Heart left ventricle (tissue), 16 donors: ENCODE measurements at regions of chr18 and their contacts with region 1.

Region 1: GRCh38 chr18:9147440-9148202 is 11.0 kb downstream of the ANKRD12 start:
- DNase-seq: peak in 2 of 5 donors; percentile 27 to 33
- ATAC-seq: peak; percentile 78 to 88 (median 84)
- H3K4me3 ChIP-seq: no peak overlapping the region
- H3K27ac ChIP-seq: peak overlapping the region in 2 of 12 donors; percentile 10 to 77
- H3K4me1 ChIP-seq: peaks cover 0 to 98% (median 69%) of the 10 kb centered on the region in 12 donors
- H3K27me3 ChIP-seq: no peaks in the 10 kb centered on the region
- CTCF ChIP-seq: peak; percentile 61 to 91 (median 74)
- POLR2A ChIP-seq: no peak

Region 2: DNA sequence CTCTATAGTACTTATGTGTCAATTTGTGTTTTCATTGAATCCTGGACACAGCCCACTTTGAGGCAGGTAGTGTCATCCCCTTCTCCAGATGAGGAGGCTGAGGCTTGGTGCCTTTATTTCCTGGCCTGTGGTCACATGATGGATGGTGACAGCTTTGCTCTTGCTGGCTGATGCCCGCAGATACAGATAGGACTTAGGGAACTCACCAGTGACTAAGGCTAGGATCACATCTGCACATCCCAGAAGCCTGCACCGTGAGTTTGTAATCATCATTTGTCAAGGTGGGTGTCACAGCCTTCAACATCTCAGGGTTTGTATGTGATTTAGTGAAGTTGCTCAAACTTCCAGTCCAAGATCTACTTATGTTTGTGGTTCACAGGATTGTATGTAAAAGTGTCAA is 833.5 kb before region 1 on chr18:
- intact Hi-C with region 1: no loop called
- DNase-seq: no peak
- ATAC-seq: no peak
- H3K4me3 ChIP-seq: no peak overlapping the region
- H3K27ac ChIP-seq: no peak overlapping the region
- H3K4me1 ChIP-seq: no peaks in the 10 kb centered on the region
- H3K27me3 ChIP-seq: no peaks in the 10 kb centered on the region
- CTCF ChIP-seq: no peak
- POLR2A ChIP-seq: no peak

Region 3: DNA sequence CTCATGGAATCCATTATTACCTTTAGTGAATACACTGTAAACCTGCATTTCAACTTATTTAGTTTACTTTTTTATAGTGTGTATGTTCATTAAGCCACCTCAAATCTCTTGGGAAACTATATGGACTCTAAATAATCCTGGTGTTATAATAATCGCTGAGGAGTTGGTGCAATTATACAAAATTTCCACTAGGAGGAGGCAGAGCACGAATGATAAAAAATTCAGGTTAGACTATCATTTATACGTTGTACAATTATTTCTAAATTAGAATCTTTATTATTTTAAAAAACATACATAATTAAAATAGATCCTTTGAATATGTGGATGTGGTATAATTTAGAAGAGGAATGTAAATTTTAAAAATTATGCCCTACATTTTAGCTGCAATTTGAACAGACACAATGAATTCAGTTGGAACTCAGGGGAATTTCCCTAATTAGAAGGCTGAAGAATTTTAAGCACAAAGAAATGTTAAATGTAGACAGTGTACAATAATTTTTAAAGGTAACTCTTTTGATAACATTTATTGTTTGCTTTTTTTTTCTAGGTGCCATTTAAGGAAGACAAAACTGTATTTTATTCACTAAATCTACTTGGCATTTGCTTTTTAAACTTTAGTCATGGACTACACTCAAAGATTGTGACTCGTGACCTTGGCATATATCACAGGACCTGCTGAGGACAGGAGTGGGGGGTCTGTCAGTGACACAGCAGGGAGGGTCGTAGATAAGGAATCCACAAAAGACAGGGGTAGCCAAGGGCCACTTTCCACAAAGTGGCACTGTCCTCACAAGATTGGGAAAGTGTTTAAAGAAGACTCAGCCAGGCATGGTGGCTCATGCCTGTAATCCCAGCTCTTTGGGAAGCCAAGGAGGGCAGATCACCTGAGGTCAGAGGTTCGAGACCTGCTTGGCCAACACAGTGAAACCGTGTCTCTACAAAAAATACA is 492.8 kb before region 1 on chr18:
- intact Hi-C with region 1: loop called in 1 of 10 experiments (anchors 5 kb)
- DNase-seq: no peak
- ATAC-seq: no peak
- H3K4me3 ChIP-seq: no peak overlapping the region
- H3K27ac ChIP-seq: no peak overlapping the region
- H3K4me1 ChIP-seq: peaks cover 0 to 6% (median 0%) of the 10 kb centered on the region in 12 donors
- H3K27me3 ChIP-seq: peaks cover 0 to 8% (median 0%) of the 10 kb centered on the region in 9 donors
- CTCF ChIP-seq: peak; percentile 69 to 89 (median 78)
- POLR2A ChIP-seq: no peak

Region 4: DNA sequence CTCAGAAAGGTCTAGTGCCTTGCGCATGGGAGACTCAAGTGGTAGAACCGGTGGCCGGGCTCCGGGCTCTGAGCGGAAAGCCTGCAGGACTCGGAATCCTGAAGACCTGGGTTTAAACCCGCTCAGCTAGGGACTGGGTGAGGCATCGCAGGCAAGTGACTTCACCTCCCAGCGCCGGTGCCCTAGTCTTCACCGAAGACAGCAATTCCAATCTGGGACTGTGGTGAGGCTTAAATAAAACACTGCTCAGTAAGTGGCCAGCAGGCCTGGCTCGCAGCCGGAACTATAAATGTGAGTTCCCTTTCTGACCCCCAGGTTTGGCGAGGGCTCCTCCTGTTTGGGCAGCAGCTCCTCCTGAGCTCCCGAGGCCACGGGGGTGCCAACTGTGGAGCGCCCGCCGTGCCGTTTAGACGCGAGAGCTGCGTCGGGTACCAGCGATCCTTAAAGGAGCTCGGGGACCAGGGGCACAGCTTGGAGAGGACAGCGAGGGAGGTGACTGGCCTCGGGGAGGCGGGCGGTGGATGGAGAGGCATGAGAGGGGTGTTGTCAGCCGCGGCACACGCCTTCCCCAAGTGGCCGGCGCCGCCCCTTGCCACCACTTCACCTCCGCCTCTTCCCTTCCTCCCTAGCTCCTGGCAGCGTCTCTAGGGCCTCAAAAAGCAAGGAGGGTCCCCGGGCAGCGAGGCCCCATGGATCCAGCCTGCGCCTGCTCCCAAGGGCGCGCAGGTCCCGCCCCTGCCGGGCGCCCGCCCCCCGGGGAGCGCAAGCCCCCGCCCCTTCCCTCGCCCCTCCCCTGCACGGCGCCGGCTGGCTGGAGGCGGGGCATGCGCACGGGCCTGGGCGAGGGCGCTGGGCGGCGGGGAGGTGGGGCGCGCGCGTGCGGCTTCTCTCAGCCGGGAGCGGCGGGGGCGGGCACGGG is 443.0 kb before region 1 on chr18:
- intact Hi-C with region 1: loop called in 2 of 10 experiments (anchors 10 kb)
- DNase-seq: peak; percentile 90 to 95 (median 92)
- ATAC-seq: peak; percentile 92 to 96 (median 95)
- H3K4me3 ChIP-seq: peak overlapping the region; percentile 44 to 95 (median 70)
- H3K27ac ChIP-seq: peak overlapping the region; percentile 76 to 95 (median 90)
- H3K4me1 ChIP-seq: peaks cover 0 to 31% (median 18%) of the 10 kb centered on the region in 12 donors
- H3K27me3 ChIP-seq: peaks cover 0 to 35% (median 0%) of the 10 kb centered on the region in 9 donors
- CTCF ChIP-seq: peak in 2 of 12 donors; percentile 6 to 8
- POLR2A ChIP-seq: peak in 1 of 2 donors; percentile 68

Region 5: DNA sequence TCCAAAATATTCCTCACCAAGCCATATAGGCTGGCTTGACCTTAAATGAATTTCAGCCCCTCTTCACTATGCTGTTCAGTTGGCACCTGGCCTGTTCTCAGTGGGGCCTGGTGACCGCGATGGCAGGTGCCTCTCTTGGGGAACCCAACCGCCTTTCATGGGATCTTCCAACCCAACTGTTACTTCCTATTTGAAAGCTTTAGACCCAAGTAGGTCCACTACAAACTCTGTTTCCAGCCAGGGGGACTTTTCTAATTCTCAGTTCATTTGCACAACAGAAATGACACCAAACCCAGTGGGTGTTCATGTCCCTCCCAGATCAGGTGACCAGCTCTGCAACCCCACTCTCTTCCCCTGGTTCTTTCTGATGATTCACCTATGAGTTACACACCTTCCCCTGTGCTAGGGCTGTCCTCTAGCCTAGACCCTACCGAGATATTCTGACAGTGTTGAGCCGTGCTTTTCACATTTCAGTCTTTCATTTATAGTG is 80.8 kb before region 1 on chr18:
- intact Hi-C with region 1: loop called in 4 of 10 experiments (anchors 2 to 5 kb)
- DNase-seq: no peak
- ATAC-seq: no peak
- H3K4me3 ChIP-seq: no peak overlapping the region
- H3K27ac ChIP-seq: no peak overlapping the region
- H3K4me1 ChIP-seq: peaks cover 0 to 37% (median 0%) of the 10 kb centered on the region in 12 donors
- H3K27me3 ChIP-seq: no peaks in the 10 kb centered on the region
- CTCF ChIP-seq: no peak
- POLR2A ChIP-seq: no peak

Region 6: DNA sequence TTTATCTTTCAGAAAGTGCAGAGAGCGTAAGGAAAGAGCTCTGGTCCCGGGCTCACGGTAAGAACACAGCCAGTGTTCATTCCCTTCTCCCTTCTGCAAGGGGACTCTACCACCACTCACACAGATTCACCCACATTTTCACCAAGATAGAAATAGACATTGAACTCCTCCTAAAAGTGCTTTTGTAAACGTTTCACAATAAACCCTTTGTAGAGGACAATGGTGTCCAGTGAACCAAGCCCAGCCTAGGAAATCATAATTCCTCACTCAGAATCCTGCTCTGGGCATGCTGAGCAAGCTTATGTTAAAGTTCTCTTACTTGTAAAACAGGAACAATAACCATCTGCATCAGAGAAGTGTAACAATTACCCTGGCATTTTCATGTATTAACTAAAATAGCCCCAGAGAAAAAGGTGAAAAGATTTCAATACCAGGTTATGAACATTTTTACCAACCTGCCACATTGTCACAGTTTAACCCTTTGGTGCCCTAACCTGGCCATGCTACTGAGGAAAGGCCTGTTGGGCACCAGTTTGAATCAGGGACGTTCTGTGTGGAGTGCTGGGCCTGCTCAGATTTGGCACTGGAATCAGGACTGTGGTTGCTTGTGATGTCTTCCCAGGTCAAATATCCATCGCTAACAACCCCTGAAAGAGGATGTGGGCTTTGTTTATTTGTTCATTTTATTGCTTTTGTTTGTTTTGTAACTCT is 67.6 kb before region 1 on chr18:
- intact Hi-C with region 1: loop called in 1 of 10 experiments (anchors 2 kb)
- DNase-seq: no peak
- ATAC-seq: peak in 2 of 4 donors; percentile 41 to 55
- H3K4me3 ChIP-seq: no peak overlapping the region
- H3K27ac ChIP-seq: peak overlapping the region in 2 of 12 donors; percentile 13 to 84
- H3K4me1 ChIP-seq: peaks cover 0 to 48% (median 0%) of the 10 kb centered on the region in 12 donors
- H3K27me3 ChIP-seq: no peaks in the 10 kb centered on the region
- CTCF ChIP-seq: no peak
- POLR2A ChIP-seq: no peak